Activated CD4-positive, alpha-beta T cell treated with anti-CD3 and anti-CD28 coated beads for 36 hours (primary cell): ENCODE measurements at regions of chr10 and their contacts with region 1.

Region 1: GRCh38 chr10:62050893-62051433 is 149.5 kb downstream of the ARID5B start:
- DNase-seq: peak; percentile 89
- ATAC-seq: peak; percentile 48
- H3K4me3 Mint-ChIP-seq: peak overlapping the region; percentile 87
- H3K27ac Mint-ChIP-seq: peak overlapping the region; percentile 100
- H3K4me1 Mint-ChIP-seq: peaks cover 95% of the 10 kb centered on the region
- H3K27me3 Mint-ChIP-seq: no peaks in the 10 kb centered on the region

Region 2: GRCh38 chr10:60572511-60573194 is 1478.3 kb before region 1 on chr10:
- CTCF ChIA-PET with region 1: no interaction called
- POLR2A ChIA-PET with region 1: no interaction called
- intact Hi-C with region 1: loop called in 1 of 2 experiments (anchors 5 kb)
- DNase-seq: peak; percentile 71
- ATAC-seq: peak; percentile 62
- H3K4me3 Mint-ChIP-seq: peak overlapping the region; percentile 78
- H3K27ac Mint-ChIP-seq: peak overlapping the region; percentile 93
- H3K4me1 Mint-ChIP-seq: peaks cover 54% of the 10 kb centered on the region
- H3K27me3 Mint-ChIP-seq: no peaks in the 10 kb centered on the region

Region 3: GRCh38 chr10:61937631-61938351 is 113.2 kb before region 1 on chr10:
- CTCF ChIA-PET with region 1: interaction called, 9 read pairs
- POLR2A ChIA-PET with region 1: interaction called, 62 read pairs
- intact Hi-C with region 1: loop called (anchors 1 kb)
- DNase-seq: no peak
- ATAC-seq: peak; percentile 62
- H3K4me3 Mint-ChIP-seq: peak overlapping the region; percentile 41
- H3K27ac Mint-ChIP-seq: peak overlapping the region; percentile 92
- H3K4me1 Mint-ChIP-seq: peaks cover 94% of the 10 kb centered on the region
- H3K27me3 Mint-ChIP-seq: no peaks in the 10 kb centered on the region

Region 4: DNA sequence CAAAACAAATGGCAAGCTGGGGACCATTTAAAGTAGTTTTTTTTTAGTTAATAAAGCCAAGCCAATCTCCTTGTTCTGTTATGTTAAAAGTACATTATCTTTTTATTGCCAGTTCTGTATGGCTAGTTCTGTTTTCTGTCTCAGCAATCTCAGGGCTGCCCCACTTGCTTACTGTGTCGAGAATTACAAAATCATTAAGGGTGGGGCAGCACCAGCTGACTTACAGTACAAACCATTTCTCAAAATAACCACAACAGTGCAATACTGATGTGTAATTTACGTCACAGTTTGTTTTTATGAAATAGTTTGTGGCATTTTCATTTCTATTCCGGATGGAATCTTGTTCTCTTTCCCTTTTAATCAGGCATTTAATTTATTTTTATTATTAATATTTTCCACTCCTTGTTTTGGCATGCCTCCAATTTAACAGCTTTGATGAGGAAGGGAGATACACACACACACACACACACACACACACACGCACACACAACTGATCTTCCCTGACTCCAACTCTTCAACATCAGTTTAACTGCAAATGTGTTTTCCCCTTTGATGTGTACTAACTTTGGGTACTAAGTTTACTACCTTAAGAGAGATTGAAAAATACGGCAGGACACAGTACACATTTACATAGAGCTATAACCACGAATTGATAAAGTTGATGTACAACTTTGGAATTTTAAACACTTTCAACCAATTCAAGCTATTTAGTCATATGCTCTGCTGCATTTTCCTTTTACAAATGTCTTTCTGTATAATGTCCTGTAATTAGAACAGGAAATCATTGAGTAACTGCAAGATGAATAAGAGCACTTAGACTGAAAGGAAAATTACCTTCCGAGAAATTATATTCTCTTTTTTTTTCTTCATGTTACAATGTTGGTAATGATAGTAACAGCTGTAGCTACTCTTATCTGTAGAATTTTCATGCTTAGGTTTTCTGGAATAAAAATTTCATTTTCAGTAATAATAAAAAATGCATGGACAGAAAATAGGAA is 58.0 kb before region 1 on chr10:
- CTCF ChIA-PET with region 1: interaction called, 21 read pairs
- POLR2A ChIA-PET with region 1: interaction called, 51 read pairs
- intact Hi-C with region 1: loop called (anchors 1 kb)
- DNase-seq: peak; percentile 74
- ATAC-seq: peak; percentile 50
- H3K4me3 Mint-ChIP-seq: peak overlapping the region; percentile 64
- H3K27ac Mint-ChIP-seq: peak overlapping the region; percentile 95
- H3K4me1 Mint-ChIP-seq: peaks cover 87% of the 10 kb centered on the region
- H3K27me3 Mint-ChIP-seq: no peaks in the 10 kb centered on the region

Region 5: DNA sequence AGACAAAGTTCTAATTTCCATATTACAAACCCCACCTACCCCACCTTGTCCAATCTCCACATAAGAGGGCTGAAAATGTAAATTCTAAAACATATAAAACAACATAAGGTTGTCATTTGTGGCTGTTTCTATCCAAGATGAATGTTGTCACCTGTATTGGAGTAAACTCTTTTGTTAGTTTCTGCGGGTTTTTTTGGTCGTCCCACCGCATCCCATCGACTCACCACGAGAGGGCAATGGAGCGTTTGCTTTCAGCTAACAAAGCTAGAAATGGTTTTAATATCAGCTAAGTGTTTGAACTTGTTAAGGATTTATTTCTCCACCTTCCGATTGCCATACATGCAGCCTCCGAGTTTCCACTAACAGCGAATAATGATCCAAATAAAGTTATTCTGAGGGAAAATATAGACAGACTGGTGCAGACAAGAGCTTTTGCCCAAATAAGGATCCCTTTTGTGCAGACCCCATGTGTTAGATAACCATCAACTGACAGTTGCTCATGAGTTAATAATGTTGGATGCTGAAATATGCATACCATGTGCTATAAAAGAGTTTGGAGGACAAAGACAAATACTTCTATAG is 12.3 kb before region 1 on chr10:
- CTCF ChIA-PET with region 1: interaction called, 48 read pairs
- POLR2A ChIA-PET with region 1: interaction called, 36 read pairs
- intact Hi-C with region 1: loop called in 1 of 2 experiments (anchors 1 kb)
- DNase-seq: peak; percentile 87
- ATAC-seq: peak; percentile 60
- H3K4me3 Mint-ChIP-seq: peak overlapping the region; percentile 45
- H3K27ac Mint-ChIP-seq: peak overlapping the region; percentile 92
- H3K4me1 Mint-ChIP-seq: peaks cover 87% of the 10 kb centered on the region
- H3K27me3 Mint-ChIP-seq: no peaks in the 10 kb centered on the region

Region 6: DNA sequence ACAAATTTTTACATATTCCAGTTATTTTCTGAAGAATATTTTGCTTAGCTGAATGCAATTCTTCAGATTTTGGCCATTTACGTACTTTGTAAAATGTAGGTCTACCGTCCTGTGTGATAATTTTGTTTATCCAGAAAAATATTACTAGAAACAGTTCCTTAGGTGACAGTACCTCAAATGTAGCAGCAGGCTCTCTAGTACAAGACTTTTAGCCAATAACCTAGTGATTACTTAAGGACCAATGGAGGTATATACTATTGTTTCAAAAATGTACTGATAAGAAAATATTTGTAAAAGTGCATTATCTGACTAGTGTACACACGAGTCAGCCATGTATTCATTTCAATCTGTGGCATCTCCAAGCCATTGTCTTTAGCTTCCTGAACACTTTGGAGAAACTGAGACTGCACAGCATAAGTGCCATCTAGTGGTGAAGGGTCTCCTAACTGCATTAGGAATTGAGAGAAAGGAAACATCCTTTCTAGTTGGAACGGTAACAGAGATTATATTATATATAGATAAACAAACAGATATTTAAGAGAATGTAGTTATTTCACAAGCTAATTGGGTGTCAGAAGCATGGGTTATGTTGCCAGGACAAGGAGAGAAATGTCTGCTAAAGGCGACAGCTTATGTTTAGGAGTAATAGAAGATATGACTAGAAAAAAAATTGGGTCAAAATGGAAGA is 194.0 kb after region 1 on chr10:
- CTCF ChIA-PET with region 1: interaction called, 10 read pairs
- POLR2A ChIA-PET with region 1: interaction called, 11 read pairs
- intact Hi-C with region 1: loop called (anchors 2 kb)
- DNase-seq: peak; percentile 65
- ATAC-seq: peak; percentile 84
- H3K4me3 Mint-ChIP-seq: peak overlapping the region; percentile 36
- H3K27ac Mint-ChIP-seq: peak overlapping the region; percentile 87
- H3K4me1 Mint-ChIP-seq: peaks cover 35% of the 10 kb centered on the region
- H3K27me3 Mint-ChIP-seq: no peaks in the 10 kb centered on the region

Region 7: GRCh38 chr10:62341419-62341818 is 290.5 kb after region 1 on chr10:
- CTCF ChIA-PET with region 1: no interaction called
- POLR2A ChIA-PET with region 1: no interaction called
- intact Hi-C with region 1: no loop called
- DNase-seq: no peak
- ATAC-seq: no peak
- H3K4me3 Mint-ChIP-seq: no peak overlapping the region
- H3K27ac Mint-ChIP-seq: no peak overlapping the region
- H3K4me1 Mint-ChIP-seq: no peaks in the 10 kb centered on the region
- H3K27me3 Mint-ChIP-seq: peaks cover 3% of the 10 kb centered on the region

Region 8: GRCh38 chr10:62732841-62733653 is 682.1 kb after region 1 on chr10:
- CTCF ChIA-PET with region 1: no interaction called
- POLR2A ChIA-PET with region 1: no interaction called
- intact Hi-C with region 1: loop called in 1 of 2 experiments (anchors 10 kb)
- DNase-seq: peak; percentile 79
- ATAC-seq: peak; percentile 87
- H3K4me3 Mint-ChIP-seq: peak overlapping the region; percentile 3
- H3K27ac Mint-ChIP-seq: no peak overlapping the region
- H3K4me1 Mint-ChIP-seq: peaks cover 25% of the 10 kb centered on the region
- H3K27me3 Mint-ChIP-seq: peaks cover 5% of the 10 kb centered on the region